Endothelial cell of umbilical vein (primary cell): ENCODE measurements at regions of chr18 and their contacts with region 1.

Region 1: GRCh38 chr18:57107140-57107832 is 39.6 kb upstream of the BOD1L2 start:
- DNase-seq: peak; percentile 48
- H3K4me3 ChIP-seq: no peak overlapping the region
- H3K27ac ChIP-seq: no peak overlapping the region
- H3K4me1 ChIP-seq: no peaks in the 10 kb centered on the region
- H3K27me3 ChIP-seq: no peaks in the 10 kb centered on the region
- CTCF ChIP-seq: no peak
- POLR2A ChIP-seq: no peak

Region 2: DNA sequence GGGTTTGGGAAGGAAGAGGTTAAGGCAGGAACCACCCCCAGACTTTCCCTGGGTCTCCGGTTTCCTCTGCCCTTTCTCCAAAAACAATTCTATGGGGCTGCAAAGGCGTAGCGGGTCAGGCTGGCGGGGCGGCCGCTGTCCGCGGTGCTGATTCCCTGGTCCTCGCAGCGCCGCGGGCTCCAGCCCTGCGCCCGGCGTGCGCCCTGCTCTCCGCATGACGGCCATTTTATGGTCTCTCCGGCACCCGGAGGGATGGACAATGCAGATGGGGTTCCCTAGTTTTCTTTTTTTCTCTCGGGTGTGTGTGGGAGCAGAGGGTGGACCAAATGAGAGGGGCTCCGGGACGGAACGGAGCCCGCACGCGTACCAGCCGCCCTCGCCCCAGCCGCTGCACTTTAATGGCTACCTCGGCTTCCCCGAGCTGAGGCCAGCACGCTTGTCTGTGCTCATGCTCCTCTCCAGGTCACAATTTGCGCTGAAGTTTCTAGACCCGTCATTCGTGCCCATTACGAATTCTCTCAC is 246.7 kb after region 1 on chr18:
- CTCF ChIA-PET with region 1: no interaction called
- POLR2A ChIA-PET with region 1: no interaction called
- dilution Hi-C with region 1: no loop called
- intact Hi-C with region 1: loop called (anchors 10 kb)
- DNase-seq: peak; percentile 22
- H3K4me3 ChIP-seq: no peak overlapping the region
- H3K27ac ChIP-seq: no peak overlapping the region
- H3K4me1 ChIP-seq: no peaks in the 10 kb centered on the region
- H3K27me3 ChIP-seq: peaks cover 26 to 27% of the 10 kb centered on the region in 2 experiments
- CTCF ChIP-seq: no peak
- POLR2A ChIP-seq: no peak